CD8-positive, alpha-beta T cell (primary cell): ENCODE measurements at regions of chr5 and their contacts with region 1.

Region 1: DNA sequence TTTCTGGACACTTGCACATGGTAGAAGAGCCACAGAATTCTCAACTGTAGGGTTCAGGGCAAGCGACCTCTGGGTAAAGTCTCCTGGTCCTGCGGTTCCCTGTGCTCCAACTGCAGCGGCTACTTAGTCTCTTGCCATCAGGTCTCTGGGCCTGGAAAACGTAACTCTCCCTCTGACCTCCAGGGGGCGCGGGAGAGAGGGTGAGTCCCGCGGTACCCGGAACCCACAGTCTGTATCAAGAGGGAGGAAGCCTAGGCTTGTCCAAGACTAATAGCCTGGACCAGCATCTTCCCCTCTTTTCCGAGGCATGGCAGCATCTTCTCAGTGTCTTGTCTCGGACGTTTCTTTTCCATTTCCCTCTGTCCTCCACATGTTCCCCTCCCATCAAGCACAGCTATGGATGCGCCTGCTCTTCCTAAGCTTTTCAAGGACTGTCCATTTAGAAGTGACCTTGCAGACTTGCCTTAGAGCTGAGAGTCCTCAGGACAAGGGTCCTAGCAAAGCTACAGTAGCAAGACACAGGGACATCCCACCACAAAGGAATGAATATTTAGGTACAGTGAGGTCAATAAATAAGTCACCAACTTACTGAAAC is 59.3 kb downstream of the FSTL4 start:
- DNase-seq: peak; percentile 11 to 65 (median 49)
- ATAC-seq: no peak
- H3K4me3 ChIP-seq: no peak overlapping the region
- H3K4me3 Mint-ChIP-seq: no peak overlapping the region
- H3K27ac ChIP-seq: no peak overlapping the region
- H3K27ac Mint-ChIP-seq: no peak overlapping the region
- H3K4me1 ChIP-seq: no peaks in the 10 kb centered on the region
- H3K4me1 Mint-ChIP-seq: no peaks in the 10 kb centered on the region
- H3K27me3 ChIP-seq: peaks cover 0 to 3% of the 10 kb centered on the region in 2 experiments
- H3K27me3 Mint-ChIP-seq: peaks cover 28% of the 10 kb centered on the region
- CTCF ChIP-seq: peak; percentile 58

Region 2: DNA sequence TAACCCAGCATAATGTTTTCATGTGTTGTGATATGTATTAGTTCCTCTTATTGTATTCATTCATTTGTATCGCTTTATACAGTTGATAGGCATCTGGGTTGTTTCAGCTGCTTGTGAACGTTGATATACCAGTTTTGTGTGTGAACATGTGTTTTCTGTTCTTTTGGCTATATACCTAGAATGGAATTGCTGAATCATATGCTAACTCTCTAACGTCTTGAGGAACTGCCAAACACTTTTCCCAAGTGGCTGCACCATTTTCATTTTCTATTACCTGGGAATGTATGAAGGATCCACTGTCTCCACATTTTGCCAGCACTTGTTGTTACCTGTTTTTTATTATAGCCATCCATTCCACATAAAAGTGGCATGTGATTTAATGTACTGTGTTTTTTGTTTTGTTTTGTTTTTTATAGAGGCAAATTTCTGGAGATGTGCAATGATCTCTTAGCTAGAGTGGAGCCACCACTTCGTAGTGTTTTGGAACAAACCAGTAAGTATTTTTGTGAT is 466.6 kb before region 1 on chr5:
- CTCF ChIA-PET with region 1: no interaction called
- POLR2A ChIA-PET with region 1: no interaction called
- intact Hi-C with region 1: no loop called
- DNase-seq: no peak
- ATAC-seq: no peak
- H3K4me3 ChIP-seq: no peak overlapping the region
- H3K4me3 Mint-ChIP-seq: no peak overlapping the region
- H3K27ac ChIP-seq: no peak overlapping the region
- H3K27ac Mint-ChIP-seq: no peak overlapping the region
- H3K4me1 ChIP-seq: no peaks in the 10 kb centered on the region
- H3K4me1 Mint-ChIP-seq: peaks cover 12% of the 10 kb centered on the region
- H3K27me3 ChIP-seq: no peaks in the 10 kb centered on the region
- H3K27me3 Mint-ChIP-seq: no peaks in the 10 kb centered on the region
- CTCF ChIP-seq: no peak

Region 3: DNA sequence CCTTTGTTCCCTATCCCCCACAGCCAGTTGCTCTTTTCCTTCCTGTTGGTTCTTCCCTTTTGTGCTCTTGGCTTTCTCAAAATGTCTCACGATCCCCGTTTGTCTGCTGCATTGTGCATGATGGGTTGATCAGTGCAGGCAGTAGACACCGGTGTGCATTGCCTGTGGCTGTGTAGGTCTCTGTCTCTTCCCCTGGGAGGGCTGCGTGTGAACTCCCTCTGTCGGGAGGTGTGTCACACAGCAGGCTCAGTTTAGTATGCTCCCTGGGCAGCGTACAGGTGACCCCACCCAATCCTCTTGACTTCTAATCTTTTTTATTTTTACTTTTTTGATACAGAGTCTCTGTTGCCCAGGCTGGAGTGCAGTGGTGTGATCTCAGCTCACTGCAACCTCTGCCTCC is 206.0 kb before region 1 on chr5:
- CTCF ChIA-PET with region 1: no interaction called
- POLR2A ChIA-PET with region 1: no interaction called
- intact Hi-C with region 1: no loop called
- DNase-seq: no peak
- ATAC-seq: no peak
- H3K4me3 ChIP-seq: no peak overlapping the region
- H3K4me3 Mint-ChIP-seq: no peak overlapping the region
- H3K27ac ChIP-seq: no peak overlapping the region
- H3K27ac Mint-ChIP-seq: no peak overlapping the region
- H3K4me1 ChIP-seq: no peaks in the 10 kb centered on the region
- H3K4me1 Mint-ChIP-seq: no peaks in the 10 kb centered on the region
- H3K27me3 ChIP-seq: no peaks in the 10 kb centered on the region
- H3K27me3 Mint-ChIP-seq: peaks cover 4% of the 10 kb centered on the region
- CTCF ChIP-seq: no peak

Region 4: GRCh38 chr5:133406977-133407678 is 145.9 kb before region 1 on chr5:
- CTCF ChIA-PET with region 1: no interaction called
- POLR2A ChIA-PET with region 1: no interaction called
- intact Hi-C with region 1: no loop called
- DNase-seq: peak in 1 of 9 experiments; percentile 39
- ATAC-seq: no peak
- H3K4me3 ChIP-seq: no peak overlapping the region
- H3K4me3 Mint-ChIP-seq: no peak overlapping the region
- H3K27ac ChIP-seq: no peak overlapping the region
- H3K27ac Mint-ChIP-seq: no peak overlapping the region
- H3K4me1 ChIP-seq: no peaks in the 10 kb centered on the region
- H3K4me1 Mint-ChIP-seq: no peaks in the 10 kb centered on the region
- H3K27me3 ChIP-seq: no peaks in the 10 kb centered on the region
- H3K27me3 Mint-ChIP-seq: peaks cover 6% of the 10 kb centered on the region
- CTCF ChIP-seq: no peak

Region 5: DNA sequence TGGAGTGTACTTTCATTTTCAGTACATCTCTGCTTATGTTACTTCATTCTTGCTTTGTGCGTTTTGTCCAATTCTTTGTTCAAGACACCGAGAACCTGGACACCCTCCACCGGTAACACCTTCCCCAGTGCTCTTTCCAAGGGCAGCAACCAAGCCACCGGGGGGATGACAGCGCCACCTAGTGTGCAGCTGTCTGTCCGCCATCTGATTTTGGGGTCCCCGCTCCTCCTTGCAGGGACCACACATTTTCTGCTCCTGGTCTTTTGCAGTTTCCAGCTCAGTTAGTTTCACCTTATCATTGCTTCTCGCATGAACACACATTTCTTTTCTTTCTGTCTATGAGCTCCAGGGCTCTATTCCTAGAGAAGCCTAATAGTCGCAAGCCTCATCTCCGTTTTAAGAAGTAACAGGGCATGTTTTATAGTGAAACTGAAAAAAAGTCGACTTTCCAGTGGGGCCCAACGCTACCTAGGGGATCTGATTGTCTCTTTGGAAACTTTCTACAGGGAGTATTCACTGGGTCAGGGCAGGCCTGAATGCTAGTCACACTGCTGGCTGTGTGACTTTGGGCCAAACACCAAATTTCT is 92.8 kb before region 1 on chr5:
- CTCF ChIA-PET with region 1: no interaction called
- POLR2A ChIA-PET with region 1: no interaction called
- intact Hi-C with region 1: no loop called
- DNase-seq: peak in 3 of 9 experiments; percentile 21 to 32 (median 29)
- ATAC-seq: no peak
- H3K4me3 ChIP-seq: no peak overlapping the region
- H3K4me3 Mint-ChIP-seq: no peak overlapping the region
- H3K27ac ChIP-seq: no peak overlapping the region
- H3K27ac Mint-ChIP-seq: no peak overlapping the region
- H3K4me1 ChIP-seq: no peaks in the 10 kb centered on the region
- H3K4me1 Mint-ChIP-seq: no peaks in the 10 kb centered on the region
- H3K27me3 ChIP-seq: no peaks in the 10 kb centered on the region
- H3K27me3 Mint-ChIP-seq: no peaks in the 10 kb centered on the region
- CTCF ChIP-seq: no peak

Region 6: DNA sequence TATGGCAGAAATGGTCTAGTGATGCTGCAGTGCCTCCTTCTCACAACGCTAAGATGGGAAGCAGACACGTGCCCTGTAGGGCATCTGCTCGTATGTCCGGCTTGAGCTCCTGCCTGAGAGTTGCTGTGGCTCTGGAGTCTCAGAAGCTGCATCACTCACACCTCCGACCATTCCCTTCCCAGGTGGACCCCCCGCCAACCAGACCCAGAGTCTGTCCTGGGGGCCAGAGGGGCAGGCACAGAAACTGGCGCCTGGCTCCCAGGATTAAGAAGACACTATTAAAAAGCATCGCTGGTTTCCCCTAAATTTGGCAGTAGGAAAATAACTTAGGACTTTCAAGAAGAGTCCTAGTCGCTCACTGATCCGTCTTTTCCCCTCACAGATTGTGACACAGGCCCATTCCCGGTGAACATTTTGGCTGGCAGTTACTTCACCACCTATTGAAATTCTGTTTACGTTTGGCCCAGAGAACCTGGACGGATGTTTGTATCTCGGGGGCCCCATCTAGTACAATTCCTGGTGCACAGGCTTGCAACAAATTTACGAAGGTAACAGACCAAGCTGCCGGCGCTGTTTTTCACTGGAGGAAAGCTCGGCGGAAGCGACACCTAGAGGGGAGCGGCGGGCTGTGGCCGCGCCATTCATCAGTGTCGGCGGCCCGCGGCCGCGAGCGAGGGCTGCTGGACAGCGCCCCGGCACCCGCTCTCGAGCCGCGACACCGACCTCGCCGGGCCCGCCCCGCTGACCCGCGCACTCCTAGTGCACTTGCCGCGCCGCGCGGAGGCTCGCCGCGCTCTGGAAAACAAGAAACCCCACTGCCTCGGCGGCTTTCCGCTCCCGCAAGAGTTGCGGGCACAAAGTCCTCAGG is 57.7 kb after region 1 on chr5:
- CTCF ChIA-PET with region 1: interaction called, 5 read pairs
- POLR2A ChIA-PET with region 1: no interaction called
- intact Hi-C with region 1: loop called in 1 of 2 experiments (anchors 5 kb)
- DNase-seq: peak in 4 of 9 experiments; percentile 18 to 40 (median 31)
- ATAC-seq: peak; percentile 38
- H3K4me3 ChIP-seq: peak overlapping the region; percentile 14 to 54
- H3K4me3 Mint-ChIP-seq: peak overlapping the region; percentile 72
- H3K27ac ChIP-seq: no peak overlapping the region
- H3K27ac Mint-ChIP-seq: no peak overlapping the region
- H3K4me1 ChIP-seq: peaks cover 5% of the 10 kb centered on the region
- H3K4me1 Mint-ChIP-seq: peaks cover 14% of the 10 kb centered on the region
- H3K27me3 ChIP-seq: peaks cover 3 to 17% of the 10 kb centered on the region in 2 experiments
- H3K27me3 Mint-ChIP-seq: peaks cover 57% of the 10 kb centered on the region
- CTCF ChIP-seq: no peak

Region 7: GRCh38 chr5:133944263-133945185 is 391.5 kb after region 1 on chr5:
- CTCF ChIA-PET with region 1: no interaction called
- POLR2A ChIA-PET with region 1: no interaction called
- intact Hi-C with region 1: loop called in 1 of 2 experiments (anchors 2 kb)
- DNase-seq: peak in 5 of 9 experiments; percentile 29 to 50 (median 38)
- ATAC-seq: no peak
- H3K4me3 ChIP-seq: no peak overlapping the region
- H3K4me3 Mint-ChIP-seq: no peak overlapping the region
- H3K27ac ChIP-seq: no peak overlapping the region
- H3K27ac Mint-ChIP-seq: no peak overlapping the region
- H3K4me1 ChIP-seq: no peaks in the 10 kb centered on the region
- H3K4me1 Mint-ChIP-seq: no peaks in the 10 kb centered on the region
- H3K27me3 ChIP-seq: no peaks in the 10 kb centered on the region
- H3K27me3 Mint-ChIP-seq: peaks cover 3% of the 10 kb centered on the region
- CTCF ChIP-seq: peak; percentile 37